Heart left ventricle (tissue), 16 donors: ENCODE measurements at regions of chr15 and their contacts with region 1.

Region 1: GRCh38 chr15:55897560-55898336 is 95.7 kb downstream of the NEDD4 start:
- DNase-seq: peak in 3 of 5 donors; percentile 46 to 57 (median 47)
- ATAC-seq: peak; percentile 81 to 94 (median 88)
- H3K4me3 ChIP-seq: peak overlapping the region in 1 of 12 donors; percentile 0
- H3K27ac ChIP-seq: peak overlapping the region; percentile 50 to 82 (median 74)
- H3K4me1 ChIP-seq: peaks cover 0 to 28% (median 15%) of the 10 kb centered on the region in 12 donors
- H3K27me3 ChIP-seq: no peaks in the 10 kb centered on the region
- CTCF ChIP-seq: peak; percentile 69 to 89 (median 82)
- POLR2A ChIP-seq: no peak

Region 2: DNA sequence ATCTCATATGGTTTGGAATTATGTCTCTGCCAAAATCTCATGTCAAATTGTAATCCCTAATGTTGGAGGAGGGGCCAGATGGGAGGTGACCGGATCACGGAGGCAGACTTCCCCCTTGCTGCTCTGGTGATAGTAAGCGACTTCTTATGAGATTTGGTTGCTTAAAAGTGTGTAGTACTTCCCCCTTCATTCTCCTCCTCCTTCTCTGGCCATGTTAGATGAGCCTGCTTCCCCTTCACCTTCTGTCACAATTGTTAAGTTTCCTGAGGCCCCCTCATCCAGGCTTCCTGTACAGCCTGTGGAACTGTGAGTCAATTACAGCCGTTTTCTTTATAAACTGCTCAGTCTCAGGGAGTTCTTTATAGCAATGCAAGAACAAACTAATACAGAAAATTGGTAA is 44.6 kb after region 1 on chr15:
- intact Hi-C with region 1: no loop called
- DNase-seq: no peak
- ATAC-seq: peak in 2 of 4 donors; percentile 45 to 81
- H3K4me3 ChIP-seq: no peak overlapping the region
- H3K27ac ChIP-seq: peak overlapping the region in 3 of 12 donors; percentile 2 to 40 (median 29)
- H3K4me1 ChIP-seq: peaks cover 0 to 13% (median 0%) of the 10 kb centered on the region in 12 donors
- H3K27me3 ChIP-seq: no peaks in the 10 kb centered on the region
- CTCF ChIP-seq: no peak
- POLR2A ChIP-seq: no peak

Region 3: DNA sequence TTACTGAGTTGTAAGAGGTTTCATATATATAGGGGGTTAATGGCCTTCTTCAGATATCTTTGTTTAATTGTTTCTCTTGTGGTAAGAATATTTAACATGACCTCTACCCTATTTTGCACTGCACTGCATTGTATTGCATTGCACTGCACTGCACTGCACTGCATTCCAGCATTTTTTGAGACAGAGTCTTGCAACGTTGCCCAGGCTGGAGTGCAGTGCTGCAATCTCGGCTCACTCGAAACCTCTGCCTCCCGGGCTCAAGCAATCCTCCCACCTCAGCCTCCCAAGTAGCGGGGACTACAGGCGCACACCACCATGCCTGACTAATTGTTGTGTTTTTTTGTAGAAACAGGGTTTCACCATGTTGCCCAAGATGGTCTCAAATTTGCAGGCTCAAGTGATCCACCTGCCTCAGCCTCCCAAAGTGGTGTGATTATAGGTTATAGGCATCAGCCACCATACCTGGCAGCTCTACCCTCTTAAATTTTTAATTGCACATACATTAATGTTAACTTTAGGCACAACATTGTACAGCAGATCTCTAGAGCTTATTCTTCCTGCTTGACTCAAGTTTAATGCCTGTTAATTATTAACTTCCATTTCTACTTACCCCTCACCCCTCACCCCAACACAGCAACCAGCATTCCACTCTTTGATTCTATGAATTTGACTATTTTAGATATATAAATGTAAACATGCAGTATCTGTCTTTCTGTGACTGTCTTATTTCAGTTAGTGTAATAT is 57.3 kb after region 1 on chr15:
- intact Hi-C with region 1: no loop called
- DNase-seq: no peak
- ATAC-seq: no peak
- H3K4me3 ChIP-seq: no peak overlapping the region
- H3K27ac ChIP-seq: no peak overlapping the region
- H3K4me1 ChIP-seq: peaks cover 0 to 3% (median 0%) of the 10 kb centered on the region in 12 donors
- H3K27me3 ChIP-seq: no peaks in the 10 kb centered on the region
- CTCF ChIP-seq: no peak
- POLR2A ChIP-seq: no peak

Region 4: DNA sequence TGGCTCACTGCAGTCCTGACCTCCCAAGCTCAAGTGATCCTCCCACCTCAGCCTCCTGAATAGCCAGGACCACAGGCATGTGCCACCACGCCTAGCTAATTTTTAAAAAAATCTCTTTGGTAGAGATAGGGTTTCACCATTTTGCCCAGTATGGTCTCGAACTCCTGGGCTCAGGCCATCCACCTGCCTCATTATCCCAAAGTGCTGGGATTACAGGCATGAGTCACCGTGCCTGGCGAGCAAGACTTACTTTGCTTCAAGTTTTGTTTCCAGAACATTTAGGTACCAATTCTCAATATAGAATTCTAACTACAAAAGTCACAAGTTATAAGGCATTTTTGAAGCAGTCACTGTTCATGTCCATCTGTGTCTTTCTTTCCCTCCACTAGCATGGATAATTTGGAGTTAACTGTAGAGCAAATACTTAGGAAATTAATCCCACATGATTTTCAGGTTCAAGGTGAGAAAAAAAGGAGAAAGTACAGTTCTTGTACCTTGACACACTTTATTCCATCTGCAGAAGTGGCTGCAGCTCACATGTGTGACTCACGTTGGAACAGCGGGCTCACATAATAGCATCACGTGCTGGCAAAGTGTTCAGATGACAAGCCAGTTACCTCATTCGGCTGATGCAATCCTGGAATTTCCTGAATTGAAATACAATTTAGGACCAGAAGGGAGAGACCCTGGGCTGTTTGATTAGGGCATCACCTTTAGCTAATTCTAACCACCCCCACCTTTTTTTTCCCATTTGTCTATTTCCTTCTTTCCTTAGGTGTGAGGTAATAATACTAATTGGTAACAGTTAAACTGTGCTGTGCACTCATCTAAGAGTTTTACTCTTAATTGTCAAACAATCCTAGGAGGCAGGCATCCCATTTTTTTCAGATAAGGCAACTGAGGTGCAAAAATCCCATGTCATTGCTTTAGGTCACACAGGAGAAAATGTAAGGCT is 142.6 kb after region 1 on chr15:
- intact Hi-C with region 1: loop called in 1 of 10 experiments (anchors 10 kb)
- DNase-seq: peak in 4 of 5 donors; percentile 29 to 56 (median 48)
- ATAC-seq: peak; percentile 77 to 91 (median 78)
- H3K4me3 ChIP-seq: no peak overlapping the region
- H3K27ac ChIP-seq: peak overlapping the region in 5 of 12 donors; percentile 2 to 57 (median 42)
- H3K4me1 ChIP-seq: peaks cover 0 to 17% (median 7%) of the 10 kb centered on the region in 12 donors
- H3K27me3 ChIP-seq: no peaks in the 10 kb centered on the region
- CTCF ChIP-seq: no peak
- POLR2A ChIP-seq: peak in 1 of 2 donors; percentile 20